Naive thymus-derived CD4-positive, alpha-beta T cell (primary cell): ENCODE measurements at regions of chr2 and their contacts with region 1.

Region 1: GRCh38 chr2:64644177-64645004 is 9.3 kb downstream of the SERTAD2 start:
- DNase-seq: peak in 8 of 9 donors; percentile 48 to 57 (median 53)
- ATAC-seq: peak; percentile 79
- H3K4me3 ChIP-seq: peak overlapping the region; percentile 62
- H3K4me3 Mint-ChIP-seq: peak overlapping the region; percentile 80 to 93 (median 90)
- H3K27ac ChIP-seq: peak overlapping the region; percentile 52
- H3K27ac Mint-ChIP-seq: peak overlapping the region; percentile 34 to 94 (median 88)
- H3K4me1 ChIP-seq: peaks cover 4 to 72% of the 10 kb centered on the region in 2 donors
- H3K4me1 Mint-ChIP-seq: peaks cover 45 to 100% (median 89%) of the 10 kb centered on the region in 7 donors
- H3K27me3 ChIP-seq: no peaks in the 10 kb centered on the region
- H3K27me3 Mint-ChIP-seq: no peaks in the 10 kb centered on the region

Region 2: DNA sequence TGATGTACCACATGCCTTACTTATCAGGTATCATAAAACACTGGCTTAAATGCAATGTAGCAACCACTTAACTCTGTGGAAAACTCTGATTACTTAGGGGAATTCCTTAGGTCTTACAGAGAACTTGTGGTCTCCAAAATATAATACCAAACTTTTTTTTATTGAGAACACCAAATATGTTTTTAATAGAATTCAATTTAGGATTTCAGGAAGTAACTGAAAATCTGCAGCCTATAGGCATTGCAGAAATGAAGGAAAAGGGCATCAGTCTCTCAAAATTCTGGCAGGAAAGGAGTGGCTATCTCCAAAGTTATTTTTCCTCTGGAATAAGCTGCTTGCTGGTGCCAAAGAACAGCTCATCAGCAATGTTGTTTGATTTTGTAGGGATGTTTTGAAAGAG is 908.0 kb before region 1 on chr2:
- CTCF ChIA-PET with region 1: no interaction called
- POLR2A ChIA-PET with region 1: no interaction called
- intact Hi-C with region 1: no loop called
- DNase-seq: no peak
- ATAC-seq: no peak
- H3K4me3 ChIP-seq: no peak overlapping the region
- H3K4me3 Mint-ChIP-seq: no peak overlapping the region
- H3K27ac ChIP-seq: no peak overlapping the region
- H3K27ac Mint-ChIP-seq: no peak overlapping the region
- H3K4me1 ChIP-seq: no peaks in the 10 kb centered on the region
- H3K4me1 Mint-ChIP-seq: no peaks in the 10 kb centered on the region
- H3K27me3 ChIP-seq: no peaks in the 10 kb centered on the region
- H3K27me3 Mint-ChIP-seq: peaks cover 0 to 10% (median 0%) of the 10 kb centered on the region in 5 donors

Region 3: DNA sequence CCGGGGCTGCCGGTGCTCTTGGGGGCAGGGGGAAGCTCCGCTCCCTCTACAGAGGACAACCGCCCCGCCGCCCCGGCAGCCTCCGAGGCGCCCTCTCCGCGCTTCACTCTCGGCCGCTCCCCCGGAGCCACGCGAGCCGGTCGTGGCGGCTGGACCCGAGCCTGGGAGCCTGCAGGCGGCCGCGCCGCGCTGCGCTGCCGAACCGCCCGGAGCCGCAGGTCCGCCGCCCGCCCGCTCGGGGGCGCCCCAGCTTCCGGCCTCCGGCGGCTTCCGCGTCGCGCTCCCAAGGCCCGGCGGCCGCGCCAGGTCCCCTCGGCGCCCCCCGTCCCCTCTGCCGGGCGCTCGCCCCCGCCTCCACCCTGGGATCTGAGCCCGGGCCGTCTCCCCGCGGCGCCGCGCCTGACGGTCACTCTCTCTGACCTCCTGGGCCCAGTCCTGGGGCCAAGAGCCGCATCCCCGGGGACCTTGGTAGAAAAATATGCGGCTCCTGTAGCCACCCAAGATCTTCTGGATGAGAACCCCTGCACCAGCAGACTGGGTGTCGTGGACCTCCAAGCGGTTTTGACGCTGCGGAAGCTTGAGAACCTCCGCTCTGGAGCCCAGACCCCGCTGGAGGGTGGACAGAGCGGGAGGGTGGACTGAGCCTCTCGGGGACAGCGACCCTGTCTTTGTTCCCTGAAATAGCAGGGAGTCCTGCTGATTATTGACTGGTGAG is 35.0 kb before region 1 on chr2:
- CTCF ChIA-PET with region 1: interaction called, 6 read pairs
- POLR2A ChIA-PET with region 1: interaction called, 9 read pairs
- intact Hi-C with region 1: loop called (anchors 1 to 2 kb)
- DNase-seq: peak; percentile 49 to 85 (median 78)
- ATAC-seq: peak; percentile 81
- H3K4me3 ChIP-seq: peak overlapping the region; percentile 66
- H3K4me3 Mint-ChIP-seq: peak overlapping the region; percentile 61 to 86 (median 72)
- H3K27ac ChIP-seq: peak overlapping the region; percentile 64
- H3K27ac Mint-ChIP-seq: peak overlapping the region in 8 of 9 donors; percentile 51 to 82 (median 66)
- H3K4me1 ChIP-seq: peaks cover 17 to 27% of the 10 kb centered on the region in 2 donors
- H3K4me1 Mint-ChIP-seq: peaks cover 0 to 33% (median 21%) of the 10 kb centered on the region in 7 donors
- H3K27me3 ChIP-seq: no peaks in the 10 kb centered on the region
- H3K27me3 Mint-ChIP-seq: peaks cover 0 to 24% (median 0%) of the 10 kb centered on the region in 5 donors

Region 4: DNA sequence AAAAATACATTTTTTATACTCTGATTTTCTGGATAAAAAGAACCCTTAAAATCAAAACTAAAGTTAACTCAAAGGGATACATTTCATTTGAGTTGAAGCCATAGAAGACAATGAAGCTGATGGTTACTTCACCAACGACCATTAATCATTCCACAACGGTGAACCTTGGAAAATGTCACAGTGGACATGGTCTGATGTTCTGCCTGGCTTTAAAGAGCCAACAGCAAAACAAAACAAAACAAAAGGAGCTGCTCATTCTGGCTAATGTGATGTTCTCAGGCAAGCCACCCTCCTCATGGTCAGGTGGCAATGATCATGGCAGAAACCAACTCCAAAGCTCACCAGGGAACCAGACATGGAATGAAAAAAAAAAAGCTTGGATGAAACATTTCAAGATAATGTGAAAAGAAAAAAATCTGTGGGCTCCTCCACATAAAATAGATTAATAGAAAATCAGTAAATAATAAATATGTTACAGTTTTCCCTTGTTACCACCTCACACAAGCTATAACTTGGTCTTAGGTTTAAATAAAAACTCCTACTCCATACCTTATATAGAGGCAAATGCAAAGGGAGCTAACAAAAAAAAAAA is 99.4 kb after region 1 on chr2:
- CTCF ChIA-PET with region 1: interaction called, 34 read pairs
- POLR2A ChIA-PET with region 1: interaction called, 433 read pairs
- intact Hi-C with region 1: no loop called
- DNase-seq: no peak
- ATAC-seq: no peak
- H3K4me3 ChIP-seq: no peak overlapping the region
- H3K4me3 Mint-ChIP-seq: no peak overlapping the region
- H3K27ac ChIP-seq: no peak overlapping the region
- H3K27ac Mint-ChIP-seq: peak overlapping the region in 1 of 9 donors; percentile 57
- H3K4me1 ChIP-seq: peaks cover 0 to 2% of the 10 kb centered on the region in 2 donors
- H3K4me1 Mint-ChIP-seq: peaks cover 0 to 19% (median 10%) of the 10 kb centered on the region in 7 donors
- H3K27me3 ChIP-seq: no peaks in the 10 kb centered on the region
- H3K27me3 Mint-ChIP-seq: no peaks in the 10 kb centered on the region

Region 5: DNA sequence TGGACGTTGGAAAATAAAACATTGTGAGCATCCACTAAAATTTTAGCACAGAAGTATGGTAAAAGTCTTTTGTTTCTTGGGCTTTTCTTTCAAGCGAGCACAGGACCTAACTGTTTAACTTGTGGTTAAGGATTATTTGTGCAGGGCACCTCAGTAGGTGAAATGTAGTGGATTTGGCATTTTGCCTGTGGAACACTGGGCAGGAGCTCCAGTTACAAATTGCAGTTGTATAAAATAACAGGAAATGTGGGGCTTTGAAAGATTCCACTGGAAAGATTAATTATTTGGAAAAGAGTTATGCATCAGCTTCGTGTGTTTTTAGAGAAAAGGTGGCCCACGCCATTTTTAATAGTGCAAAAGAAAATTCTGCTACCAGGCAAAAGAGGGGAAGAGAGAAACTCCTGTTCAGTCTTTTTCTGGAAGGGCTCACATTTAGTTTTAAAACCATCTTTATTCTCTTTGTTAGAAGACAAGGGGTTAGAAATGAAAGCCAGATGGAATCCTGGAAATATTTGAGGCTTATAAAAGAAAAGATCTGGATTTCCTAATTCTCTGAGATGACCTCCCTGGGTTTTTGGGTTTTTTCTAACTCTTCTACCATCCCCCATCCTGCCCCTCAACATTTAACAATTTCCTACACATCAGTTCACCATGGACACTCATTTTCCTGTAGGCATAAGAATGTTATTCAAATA is 153.6 kb after region 1 on chr2:
- CTCF ChIA-PET with region 1: no interaction called
- POLR2A ChIA-PET with region 1: no interaction called
- intact Hi-C with region 1: no loop called
- DNase-seq: no peak
- ATAC-seq: no peak
- H3K4me3 ChIP-seq: no peak overlapping the region
- H3K4me3 Mint-ChIP-seq: no peak overlapping the region
- H3K27ac ChIP-seq: no peak overlapping the region
- H3K27ac Mint-ChIP-seq: no peak overlapping the region
- H3K4me1 ChIP-seq: peaks cover 0 to 6% of the 10 kb centered on the region in 2 donors
- H3K4me1 Mint-ChIP-seq: peaks cover 0 to 2% (median 0%) of the 10 kb centered on the region in 7 donors
- H3K27me3 ChIP-seq: no peaks in the 10 kb centered on the region
- H3K27me3 Mint-ChIP-seq: peaks cover 0 to 17% (median 5%) of the 10 kb centered on the region in 5 donors

Region 6: GRCh38 chr2:64831134-64831976 is 187.0 kb after region 1 on chr2:
- CTCF ChIA-PET with region 1: interaction called, 117 read pairs
- POLR2A ChIA-PET with region 1: interaction called, 61 read pairs
- intact Hi-C with region 1: loop called (anchors 1 kb)
- DNase-seq: peak; percentile 61 to 89 (median 78)
- ATAC-seq: peak; percentile 95
- H3K4me3 ChIP-seq: peak overlapping the region; percentile 7
- H3K4me3 Mint-ChIP-seq: peak overlapping the region in 1 of 10 donors; percentile 8
- H3K27ac ChIP-seq: no peak overlapping the region
- H3K27ac Mint-ChIP-seq: peak overlapping the region in 1 of 9 donors; percentile 72
- H3K4me1 ChIP-seq: peaks cover 0 to 9% of the 10 kb centered on the region in 2 donors
- H3K4me1 Mint-ChIP-seq: peaks cover 0 to 25% (median 4%) of the 10 kb centered on the region in 7 donors
- H3K27me3 ChIP-seq: no peaks in the 10 kb centered on the region
- H3K27me3 Mint-ChIP-seq: peaks cover 0 to 9% (median 4%) of the 10 kb centered on the region in 5 donors

Region 7: DNA sequence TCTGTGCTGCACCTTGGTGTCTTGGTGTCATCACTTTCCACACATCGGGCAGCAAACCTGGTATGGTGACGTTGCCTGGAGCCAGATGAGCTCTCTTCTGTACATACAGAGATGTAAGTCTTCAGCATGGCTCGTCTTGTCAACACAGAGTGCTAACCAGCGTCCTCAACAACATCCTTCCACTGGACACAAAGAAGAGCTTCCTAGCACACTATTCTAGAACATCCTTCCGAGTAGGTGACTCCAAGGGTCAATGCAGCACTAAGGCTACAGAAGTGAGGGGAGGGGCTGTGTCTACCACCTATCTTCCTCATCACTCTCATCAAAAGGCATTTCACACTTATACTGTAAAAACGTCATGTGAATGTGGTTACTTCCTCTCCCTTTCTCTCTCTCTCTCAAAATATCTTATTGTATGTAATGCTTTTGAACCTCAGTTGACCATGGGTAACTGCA is 236.7 kb after region 1 on chr2:
- CTCF ChIA-PET with region 1: no interaction called
- POLR2A ChIA-PET with region 1: no interaction called
- intact Hi-C with region 1: no loop called
- DNase-seq: no peak
- ATAC-seq: peak; percentile 85
- H3K4me3 ChIP-seq: no peak overlapping the region
- H3K4me3 Mint-ChIP-seq: no peak overlapping the region
- H3K27ac ChIP-seq: no peak overlapping the region
- H3K27ac Mint-ChIP-seq: no peak overlapping the region
- H3K4me1 ChIP-seq: peaks cover 0 to 8% of the 10 kb centered on the region in 2 donors
- H3K4me1 Mint-ChIP-seq: peaks cover 0 to 11% (median 5%) of the 10 kb centered on the region in 7 donors
- H3K27me3 ChIP-seq: no peaks in the 10 kb centered on the region
- H3K27me3 Mint-ChIP-seq: peaks cover 0 to 17% (median 5%) of the 10 kb centered on the region in 5 donors

Region 8: DNA sequence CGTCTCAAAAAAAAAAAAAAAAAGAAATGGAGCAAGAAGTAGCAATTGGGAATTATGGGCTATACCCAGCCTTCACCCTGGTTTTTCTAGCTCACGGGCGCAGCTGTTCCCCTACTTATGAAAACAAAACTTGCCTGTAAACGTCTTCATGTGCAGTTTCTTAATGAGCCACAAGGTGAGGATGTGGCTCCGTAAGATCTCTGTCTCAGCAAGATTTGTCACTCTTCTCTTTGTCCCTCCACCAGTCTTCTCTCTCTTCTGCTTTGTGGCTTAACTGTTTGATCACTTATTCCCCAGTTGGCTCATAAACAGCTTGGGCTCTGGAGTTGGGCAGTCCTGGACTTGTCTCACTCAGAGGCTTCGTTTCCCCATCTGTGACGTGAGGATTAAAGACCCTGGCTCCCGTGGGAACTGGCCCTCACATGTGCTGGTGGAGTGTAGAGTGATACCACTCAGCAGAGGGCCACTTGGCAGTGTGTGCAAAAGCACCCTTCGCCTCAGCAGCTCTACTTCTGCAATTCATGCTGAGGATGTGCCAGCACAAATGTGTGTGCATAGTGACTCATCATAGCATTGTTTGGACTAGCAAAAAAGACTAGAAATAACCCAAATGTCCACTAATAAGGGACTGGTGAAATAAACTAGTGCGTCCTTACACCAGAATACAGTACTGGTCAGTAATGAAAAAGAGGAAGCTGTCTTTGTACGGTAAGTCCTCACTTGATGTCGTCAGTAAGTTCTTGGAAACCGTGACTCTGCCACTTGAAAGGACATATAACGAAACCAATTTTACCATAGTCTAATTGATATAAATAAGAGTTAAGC is 420.5 kb after region 1 on chr2:
- CTCF ChIA-PET with region 1: no interaction called
- POLR2A ChIA-PET with region 1: no interaction called
- intact Hi-C with region 1: no loop called
- DNase-seq: peak in 7 of 9 donors; percentile 43 to 72 (median 56)
- ATAC-seq: peak; percentile 83
- H3K4me3 ChIP-seq: no peak overlapping the region
- H3K4me3 Mint-ChIP-seq: peak overlapping the region in 3 of 10 donors; percentile 3 to 41 (median 6)
- H3K27ac ChIP-seq: no peak overlapping the region
- H3K27ac Mint-ChIP-seq: peak overlapping the region in 6 of 9 donors; percentile 5 to 77 (median 40)
- H3K4me1 ChIP-seq: peaks cover 0 to 25% of the 10 kb centered on the region in 2 donors
- H3K4me1 Mint-ChIP-seq: peaks cover 21 to 65% (median 52%) of the 10 kb centered on the region in 7 donors
- H3K27me3 ChIP-seq: no peaks in the 10 kb centered on the region
- H3K27me3 Mint-ChIP-seq: no peaks in the 10 kb centered on the region